Tibial artery (tissue), 4 donors: ENCODE measurements at regions of chr6 and their contacts with region 1.

Region 1: GRCh38 chr6:146543211-146543939 is at the start of gene RAB32:
- DNase-seq: peak; percentile 94 to 98
- H3K4me3 ChIP-seq: peak within 1 kb of the TSS; percentile 79 to 83
- H3K27ac ChIP-seq: peak within 1 kb of the TSS; percentile 98 to 99
- H3K4me1 ChIP-seq: peaks cover 0 to 39% (median 21%) of the 10 kb centered on the region in 4 donors
- H3K27me3 ChIP-seq: no peaks in the 10 kb centered on the region
- CTCF ChIP-seq: peak; percentile 66 to 69

Region 2: GRCh38 chr6:145904868-145905267 is 638.5 kb before region 1 on chr6:
- intact Hi-C with region 1: no loop called
- DNase-seq: no peak
- H3K4me3 ChIP-seq: no peak overlapping the region
- H3K27ac ChIP-seq: no peak overlapping the region
- H3K4me1 ChIP-seq: peaks cover 0 to 10% (median 1%) of the 10 kb centered on the region in 4 donors
- H3K27me3 ChIP-seq: no peaks in the 10 kb centered on the region
- CTCF ChIP-seq: no peak

Region 3: GRCh38 chr6:145963216-145964068 is 579.9 kb before region 1 on chr6:
- intact Hi-C with region 1: loop called (anchors 10 kb)
- DNase-seq: peak; percentile 37 to 76
- H3K4me3 ChIP-seq: peak overlapping the region; percentile 81 to 92
- H3K27ac ChIP-seq: peak overlapping the region; percentile 87 to 94
- H3K4me1 ChIP-seq: peaks cover 0 to 38% (median 24%) of the 10 kb centered on the region in 4 donors
- H3K27me3 ChIP-seq: no peaks in the 10 kb centered on the region
- CTCF ChIP-seq: no peak

Region 4: GRCh38 chr6:146670161-146670560 is 126.8 kb after region 1 on chr6:
- intact Hi-C with region 1: no loop called
- DNase-seq: no peak
- H3K4me3 ChIP-seq: no peak overlapping the region
- H3K27ac ChIP-seq: no peak overlapping the region
- H3K4me1 ChIP-seq: no peaks in the 10 kb centered on the region
- H3K27me3 ChIP-seq: no peaks in the 10 kb centered on the region
- CTCF ChIP-seq: no peak

Region 5: GRCh38 chr6:146700078-146700686 is 156.8 kb after region 1 on chr6:
- intact Hi-C with region 1: loop called (anchors 5 kb)
- DNase-seq: peak; percentile 72 to 79
- H3K4me3 ChIP-seq: no peak overlapping the region
- H3K27ac ChIP-seq: no peak overlapping the region
- H3K4me1 ChIP-seq: no peaks in the 10 kb centered on the region
- H3K27me3 ChIP-seq: no peaks in the 10 kb centered on the region
- CTCF ChIP-seq: peak; percentile 67 to 68

Region 6: DNA sequence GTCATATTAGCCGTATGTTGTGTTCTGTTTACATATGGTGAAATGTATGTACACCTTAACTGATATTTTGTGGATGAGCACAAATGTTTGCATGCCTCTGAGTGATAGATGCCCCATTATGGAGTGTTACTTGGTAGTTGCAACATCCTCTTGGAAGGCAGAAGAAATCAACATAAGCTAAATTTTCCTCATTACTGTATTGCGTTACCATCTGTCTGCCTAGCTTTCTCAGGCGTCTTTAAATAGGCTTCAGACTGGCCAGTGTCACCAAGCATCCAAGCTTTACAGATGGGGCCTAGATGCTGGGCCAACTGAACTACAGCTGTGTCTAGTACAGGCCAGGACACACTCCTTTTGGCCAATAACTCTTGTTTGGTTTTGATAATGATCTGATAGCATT is 1215.7 kb after region 1 on chr6:
- intact Hi-C with region 1: no loop called
- DNase-seq: no peak
- H3K4me3 ChIP-seq: no peak overlapping the region
- H3K27ac ChIP-seq: no peak overlapping the region
- H3K4me1 ChIP-seq: no peaks in the 10 kb centered on the region
- H3K27me3 ChIP-seq: no peaks in the 10 kb centered on the region
- CTCF ChIP-seq: no peak